Psoas muscle (tissue), 8 donors: ENCODE measurements at regions of chr6 and their contacts with region 1.

Region 1: GRCh38 chr6:84220809-84221409 is 6.5 kb downstream of the CEP162 start:
- DNase-seq: no peak
- ATAC-seq: no peak
- H3K4me3 ChIP-seq: no peak overlapping the region
- H3K27ac ChIP-seq: no peak overlapping the region
- H3K4me1 ChIP-seq: no peaks in the 10 kb centered on the region
- H3K27me3 ChIP-seq: no peaks in the 10 kb centered on the region
- CTCF ChIP-seq: peak; percentile 57

Region 2: GRCh38 chr6:83615025-83615999 is 605.6 kb before region 1 on chr6:
- intact Hi-C with region 1: loop called (anchors 5 to 10 kb)
- DNase-seq: no peak
- ATAC-seq: no peak
- H3K4me3 ChIP-seq: no peak overlapping the region
- H3K27ac ChIP-seq: no peak overlapping the region
- H3K4me1 ChIP-seq: no peaks in the 10 kb centered on the region
- H3K27me3 ChIP-seq: no peaks in the 10 kb centered on the region
- CTCF ChIP-seq: peak; percentile 46

Region 3: DNA sequence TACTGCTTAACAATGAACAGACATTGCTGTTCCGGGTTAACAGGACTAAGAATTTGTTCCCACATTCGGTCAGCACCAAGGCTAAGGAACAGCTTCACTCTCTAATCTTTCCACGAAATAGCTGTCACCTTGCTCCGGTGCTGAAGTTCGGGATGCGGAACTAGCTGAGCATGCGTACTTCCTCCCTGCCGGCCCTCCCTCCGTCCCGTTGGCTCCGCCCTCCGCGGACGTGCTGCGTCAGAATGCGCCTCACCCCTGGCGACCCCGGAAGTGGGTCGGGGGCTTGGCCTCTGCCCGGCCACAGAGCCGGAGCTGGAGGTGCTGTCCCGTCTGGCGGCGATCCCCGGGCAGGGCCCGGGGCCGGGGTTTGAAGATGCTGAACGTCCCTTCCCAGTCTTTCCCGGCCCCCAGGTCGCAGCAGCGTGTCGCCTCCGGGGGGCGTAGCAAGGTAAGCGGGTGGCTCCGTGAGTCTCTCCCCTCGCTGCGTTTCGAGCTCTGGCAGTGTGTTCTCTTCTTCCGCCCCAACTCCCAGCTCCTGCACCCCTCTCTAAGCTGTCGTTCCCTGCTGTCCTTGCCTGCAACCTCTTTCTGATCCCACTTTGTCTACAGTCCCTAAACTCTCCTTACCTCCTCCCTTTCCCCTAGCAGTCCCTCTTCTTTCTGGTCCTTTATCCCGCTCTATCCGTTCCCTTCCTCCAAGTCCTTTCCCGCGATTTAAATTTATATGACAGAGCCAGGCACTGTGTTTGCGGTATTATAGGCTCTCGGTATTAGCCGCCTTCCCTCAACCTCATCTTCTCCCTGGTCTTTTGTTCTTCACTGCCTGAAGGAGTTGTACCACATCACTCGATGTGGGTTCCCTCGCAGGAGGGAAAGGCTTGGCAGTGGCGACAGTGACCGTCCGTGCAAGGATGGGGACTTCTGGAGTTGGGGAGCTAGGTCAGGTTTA is 361.2 kb before region 1 on chr6 and contains the start of gene CYB5R4:
- intact Hi-C with region 1: loop called in 1 of 2 experiments (anchors 5 kb)
- DNase-seq: peak; percentile 94 to 97
- ATAC-seq: peak; percentile 99 to 100 (median 100)
- H3K4me3 ChIP-seq: peak within 1 kb of the TSS; percentile 93
- H3K27ac ChIP-seq: peak within 1 kb of the TSS; percentile 87
- H3K4me1 ChIP-seq: peaks cover 19% of the 10 kb centered on the region
- H3K27me3 ChIP-seq: peaks cover 0 to 8% (median 4%) of the 10 kb centered on the region in 3 donors
- CTCF ChIP-seq: peak; percentile 39
- total RNA-seq, gene CYB5R4: 9.3 to 15.1 (median 13.2) TPM

Region 4: DNA sequence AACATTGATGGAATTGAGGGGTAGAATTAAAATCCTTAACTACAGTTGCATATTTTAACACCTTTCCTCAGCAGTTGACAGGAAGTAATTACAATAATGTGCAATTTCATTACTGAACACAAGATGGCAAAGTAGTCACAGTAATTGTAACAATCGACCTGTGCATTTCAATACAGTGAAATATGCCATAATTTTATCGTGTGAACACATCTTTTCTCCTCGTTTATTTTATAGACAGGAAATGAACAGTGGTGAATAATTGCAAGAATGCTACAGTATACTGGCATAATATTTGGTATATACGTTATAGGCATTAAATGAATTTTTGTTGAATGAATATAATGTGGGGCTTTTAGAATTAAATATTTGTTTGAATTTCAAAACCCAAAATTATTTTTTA is 336.4 kb before region 1 on chr6:
- intact Hi-C with region 1: loop called (anchors 2 kb)
- DNase-seq: no peak
- ATAC-seq: peak in 2 of 4 donors; percentile 59 to 83
- H3K4me3 ChIP-seq: no peak overlapping the region
- H3K27ac ChIP-seq: no peak overlapping the region
- H3K4me1 ChIP-seq: peaks cover 4% of the 10 kb centered on the region
- H3K27me3 ChIP-seq: no peaks in the 10 kb centered on the region
- CTCF ChIP-seq: peak; percentile 69

Region 5: GRCh38 chr6:84065693-84066290 is 155.1 kb before region 1 on chr6:
- intact Hi-C with region 1: no loop called
- DNase-seq: no peak
- ATAC-seq: no peak
- H3K4me3 ChIP-seq: no peak overlapping the region
- H3K27ac ChIP-seq: no peak overlapping the region
- H3K4me1 ChIP-seq: no peaks in the 10 kb centered on the region
- H3K27me3 ChIP-seq: no peaks in the 10 kb centered on the region
- CTCF ChIP-seq: no peak